Breast epithelium (tissue), 4 donors: ENCODE measurements at regions of chr2 and their contacts with region 1.

Region 1: DNA sequence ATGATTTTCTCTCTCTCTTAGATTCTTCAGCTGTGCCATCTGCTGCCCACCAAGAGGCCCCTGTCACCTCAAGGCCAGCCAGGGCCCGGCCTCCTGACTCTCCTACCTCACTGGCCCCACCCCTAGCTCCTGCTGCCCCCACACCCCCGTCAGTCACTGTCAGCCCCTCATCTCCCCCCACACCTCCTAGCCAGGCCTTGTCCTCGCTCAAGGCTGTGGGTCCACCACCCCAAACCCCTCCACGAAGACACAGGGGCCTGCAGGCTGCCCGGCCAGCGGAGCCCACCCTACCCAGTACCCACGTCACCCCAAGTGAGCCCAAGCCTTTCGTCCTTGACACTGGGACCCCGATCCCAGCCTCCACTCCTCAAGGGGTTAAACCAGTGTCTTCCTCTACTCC is 9.4 kb upstream of the GMPPA start:
- DNase-seq: no peak
- H3K4me3 ChIP-seq: no peak overlapping the region
- H3K27ac ChIP-seq: no peak overlapping the region
- H3K4me1 ChIP-seq: no peaks in the 10 kb centered on the region
- H3K27me3 ChIP-seq: peaks cover 0 to 4% of the 10 kb centered on the region in 2 donors
- CTCF ChIP-seq: no peak
- POLR2A ChIP-seq: no peak

Region 2: DNA sequence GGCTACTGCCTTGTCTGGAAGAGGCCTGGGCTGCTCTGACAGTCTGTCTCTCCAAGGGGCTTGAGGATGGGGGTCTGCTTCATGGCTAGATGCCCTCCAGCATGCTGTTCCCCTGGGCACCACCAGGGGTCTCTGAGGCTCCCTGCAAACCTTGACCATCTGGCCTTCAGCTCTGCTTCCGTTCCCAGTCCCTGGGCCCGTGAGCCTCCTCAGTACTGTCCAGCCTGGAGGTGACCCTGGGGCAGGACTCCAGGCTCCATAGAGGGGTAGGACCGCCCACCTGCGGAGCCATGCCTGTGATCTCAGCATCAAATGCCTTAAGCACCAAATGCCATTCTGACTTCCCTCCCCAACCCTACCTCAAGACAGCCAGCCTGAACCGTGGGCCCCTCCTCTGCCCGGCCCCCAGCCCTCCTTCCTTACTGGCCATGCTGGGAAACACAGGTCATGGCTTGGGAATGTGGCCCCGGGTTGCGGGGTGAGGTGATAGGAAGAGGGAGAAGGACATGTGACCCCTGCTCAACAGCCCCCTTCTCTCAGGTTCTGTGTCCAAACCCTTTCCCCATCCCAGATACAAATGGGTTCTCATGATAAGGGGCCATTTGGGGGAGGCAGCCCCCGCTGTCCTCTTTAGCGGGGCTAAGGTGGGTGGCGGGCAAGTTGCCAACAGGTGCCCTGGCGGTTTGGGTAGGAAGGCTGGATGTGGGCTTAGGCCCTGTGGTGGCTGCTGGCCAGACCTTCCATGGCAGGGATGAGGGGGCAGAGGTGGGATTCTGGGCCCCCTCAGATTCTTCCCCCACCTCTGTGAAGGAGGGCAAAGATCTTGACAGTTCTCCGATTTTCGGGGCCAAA is 29.6 kb before region 1 on chr2:
- intact Hi-C with region 1: loop called (anchors 1 kb)
- DNase-seq: no peak
- H3K4me3 ChIP-seq: no peak overlapping the region
- H3K27ac ChIP-seq: peak overlapping the region; percentile 71 to 84
- H3K4me1 ChIP-seq: peaks cover 6 to 20% of the 10 kb centered on the region in 2 donors
- H3K27me3 ChIP-seq: no peaks in the 10 kb centered on the region
- CTCF ChIP-seq: peak; percentile 44 to 80 (median 77)
- POLR2A ChIP-seq: no peak

Region 3: GRCh38 chr2:219470429-219470828 is 18.9 kb before region 1 on chr2:
- intact Hi-C with region 1: loop called (anchors 1 kb)
- DNase-seq: no peak
- H3K4me3 ChIP-seq: no peak overlapping the region
- H3K27ac ChIP-seq: no peak overlapping the region
- H3K4me1 ChIP-seq: no peaks in the 10 kb centered on the region
- H3K27me3 ChIP-seq: no peaks in the 10 kb centered on the region
- CTCF ChIP-seq: no peak
- POLR2A ChIP-seq: no peak

Region 4: GRCh38 chr2:219509780-219510511 is 20.6 kb after region 1 on chr2:
- intact Hi-C with region 1: no loop called
- DNase-seq: no peak
- H3K4me3 ChIP-seq: peak overlapping the region in 2 of 3 donors; percentile 24 to 57
- H3K27ac ChIP-seq: no peak overlapping the region
- H3K4me1 ChIP-seq: no peaks in the 10 kb centered on the region
- H3K27me3 ChIP-seq: peaks cover 0 to 20% of the 10 kb centered on the region in 2 donors
- CTCF ChIP-seq: peak in 2 of 3 donors; percentile 46 to 47
- POLR2A ChIP-seq: no peak